CD4-positive, alpha-beta T cell (primary cell): ENCODE measurements at regions of chr7 and their contacts with region 1.

Region 1: GRCh38 chr7:119175911-119176627 is 951.6 kb downstream of the ANKRD7 start:
- DNase-seq: peak in 3 of 14 experiments; percentile 12 to 19 (median 15)
- ATAC-seq: no peak
- H3K4me3 ChIP-seq: no peak overlapping the region
- H3K4me3 Mint-ChIP-seq: no peak overlapping the region
- H3K27ac ChIP-seq: no peak overlapping the region
- H3K27ac Mint-ChIP-seq: no peak overlapping the region
- H3K4me1 ChIP-seq: no peaks in the 10 kb centered on the region
- H3K4me1 Mint-ChIP-seq: no peaks in the 10 kb centered on the region
- H3K27me3 ChIP-seq: no peaks in the 10 kb centered on the region
- H3K27me3 Mint-ChIP-seq: no peaks in the 10 kb centered on the region
- CTCF ChIP-seq: no peak

Region 2: DNA sequence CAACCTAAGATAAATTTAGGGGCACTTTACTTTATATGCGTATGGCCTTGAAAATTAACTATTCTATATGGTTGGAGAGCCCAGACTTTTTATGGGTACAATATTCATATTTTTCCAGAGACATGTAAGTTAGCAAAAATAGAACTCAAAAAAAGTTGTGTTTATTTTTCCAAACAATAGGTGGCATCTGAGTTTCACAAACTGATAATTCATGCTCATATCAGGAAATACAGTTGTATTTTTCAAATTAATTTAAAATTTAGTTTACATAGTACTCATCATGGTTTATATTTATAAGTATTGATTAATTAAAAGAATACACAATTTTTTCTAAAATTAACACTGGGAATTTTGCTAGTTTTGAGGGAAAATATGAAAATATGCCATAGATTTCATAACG is 917.0 kb before region 1 on chr7:
- CTCF ChIA-PET with region 1: no interaction called
- POLR2A ChIA-PET with region 1: no interaction called
- intact Hi-C with region 1: loop called in 1 of 2 experiments (anchors 5 kb)
- DNase-seq: peak in 1 of 14 experiments; percentile 3
- ATAC-seq: no peak
- H3K4me3 ChIP-seq: no peak overlapping the region
- H3K4me3 Mint-ChIP-seq: no peak overlapping the region
- H3K27ac ChIP-seq: no peak overlapping the region
- H3K27ac Mint-ChIP-seq: no peak overlapping the region
- H3K4me1 ChIP-seq: no peaks in the 10 kb centered on the region
- H3K4me1 Mint-ChIP-seq: no peaks in the 10 kb centered on the region
- H3K27me3 ChIP-seq: no peaks in the 10 kb centered on the region
- H3K27me3 Mint-ChIP-seq: peaks cover 9% of the 10 kb centered on the region
- CTCF ChIP-seq: no peak

Region 3: DNA sequence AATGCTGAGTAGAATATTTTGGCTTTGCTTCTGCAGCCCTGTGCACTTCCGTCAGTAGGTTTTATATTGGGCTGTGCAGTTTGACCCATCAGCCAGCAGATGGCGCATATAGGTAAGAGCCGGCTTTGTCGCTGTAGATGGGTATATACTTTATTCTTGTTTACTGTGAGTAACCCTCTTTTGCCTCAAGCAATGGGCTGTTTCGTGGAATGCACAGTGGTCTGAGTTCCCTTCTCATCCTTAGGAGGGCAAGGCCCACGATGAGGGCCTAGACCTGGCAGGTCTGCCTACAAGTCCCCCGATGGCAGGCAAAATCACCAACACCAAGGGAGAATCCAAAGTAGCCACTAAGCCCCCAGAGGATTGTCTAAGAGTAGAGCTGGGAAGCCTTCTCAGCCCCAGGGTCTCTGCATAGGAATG is 94.0 kb after region 1 on chr7:
- CTCF ChIA-PET with region 1: no interaction called
- POLR2A ChIA-PET with region 1: no interaction called
- intact Hi-C with region 1: no loop called
- DNase-seq: peak in 2 of 14 experiments; percentile 12 to 19
- ATAC-seq: no peak
- H3K4me3 ChIP-seq: no peak overlapping the region
- H3K4me3 Mint-ChIP-seq: no peak overlapping the region
- H3K27ac ChIP-seq: no peak overlapping the region
- H3K27ac Mint-ChIP-seq: no peak overlapping the region
- H3K4me1 ChIP-seq: no peaks in the 10 kb centered on the region
- H3K4me1 Mint-ChIP-seq: no peaks in the 10 kb centered on the region
- H3K27me3 ChIP-seq: no peaks in the 10 kb centered on the region
- H3K27me3 Mint-ChIP-seq: no peaks in the 10 kb centered on the region
- CTCF ChIP-seq: no peak